ENCODE measurements at regions of chr3 and their contacts with region 1.

Region 1: DNA sequence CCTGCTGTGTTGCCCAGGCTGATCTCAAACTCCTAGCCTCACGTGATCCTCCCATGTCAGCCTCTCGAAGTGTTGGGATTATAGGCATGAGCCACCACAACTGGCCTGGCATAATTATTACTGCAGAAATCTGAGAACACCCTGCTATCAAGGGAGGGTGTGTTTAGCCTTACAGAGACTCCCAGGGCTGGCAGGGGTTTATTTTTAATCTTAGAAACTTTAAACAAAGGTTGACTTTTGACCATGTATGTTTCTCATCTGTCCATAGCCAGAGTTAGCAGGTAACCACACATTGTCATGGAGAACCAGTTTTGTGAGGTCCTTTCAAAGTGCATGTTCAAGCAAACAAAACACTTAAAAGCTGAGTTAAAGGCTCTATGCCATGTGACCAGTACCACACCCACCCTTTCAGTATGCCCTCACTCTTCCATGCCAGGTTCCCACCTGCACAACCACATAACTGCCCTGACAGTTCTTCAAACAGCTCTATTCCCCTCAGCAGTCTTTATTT is 11.2 kb downstream of the SIAH2 start:
- DNase-seq: peak; percentile 38
- ATAC-seq: peak; percentile 26
- H3K4me3 ChIP-seq: no peak overlapping the region
- H3K27ac ChIP-seq: peak overlapping the region; percentile 27
- H3K4me1 ChIP-seq: peaks cover 97% of the 10 kb centered on the region
- H3K27me3 ChIP-seq: no peaks in the 10 kb centered on the region
- CTCF ChIP-seq: no peak
- EP300 ChIP-seq: no peak
- POLR2A ChIP-seq: 0 out of 4 replicates have a peak, but pooled peaks of 1 of the 2 experiments have one; percentile 18
- RAD21 ChIP-seq: no peak

Region 2: GRCh38 chr3:150737874-150738713 is 13.7 kb before region 1 on chr3:
- CTCF ChIA-PET with region 1: no interaction called
- POLR2A ChIA-PET with region 1: interaction called, 15 read pairs
- in situ Hi-C with region 1: no loop called
- intact Hi-C with region 1: no loop called
- DNase-seq: peak; percentile 96
- ATAC-seq: peak; percentile 73
- H3K4me3 ChIP-seq: peak overlapping the region in 1 of 3 experiments; percentile 38; a peak in 1 of 6 replicates
- H3K27ac ChIP-seq: peak overlapping the region; percentile 99
- H3K4me1 ChIP-seq: peaks cover 100% of the 10 kb centered on the region
- H3K27me3 ChIP-seq: no peaks in the 10 kb centered on the region
- CTCF ChIP-seq: no peak
- EP300 ChIP-seq: peak; percentile 41 to 90; a peak in 3 of 4 replicates
- POLR2A ChIP-seq: no peak; a peak in 1 of 4 replicates
- RAD21 ChIP-seq: 0 out of 2 replicates have a peak, but pooled peaks have one; percentile 12

Measured in HepG2 (cell line).